IMR-90 (cell line): ENCODE measurements at regions of chr7 and their contacts with region 1.

Region 1: GRCh38 chr7:98841179-98841997 is 28.4 kb downstream of the TMEM130 start:
- DNase-seq: peak; percentile 85
- ATAC-seq: peak; percentile 88
- H3K4me3 ChIP-seq: no peak overlapping the region
- H3K27ac ChIP-seq: peak overlapping the region; percentile 26; the same call in 1 of the 2 replicates
- H3K4me1 ChIP-seq: peaks cover 5% of the 10 kb centered on the region; the same call in 1 of the 2 replicates
- H3K27me3 ChIP-seq: no peaks in the 10 kb centered on the region; the same call in 1 of the 2 replicates
- CTCF ChIP-seq: peak; percentile 90
- POLR2A ChIP-seq: no peak
- RAD21 ChIP-seq: peak; percentile 93

Region 2: DNA sequence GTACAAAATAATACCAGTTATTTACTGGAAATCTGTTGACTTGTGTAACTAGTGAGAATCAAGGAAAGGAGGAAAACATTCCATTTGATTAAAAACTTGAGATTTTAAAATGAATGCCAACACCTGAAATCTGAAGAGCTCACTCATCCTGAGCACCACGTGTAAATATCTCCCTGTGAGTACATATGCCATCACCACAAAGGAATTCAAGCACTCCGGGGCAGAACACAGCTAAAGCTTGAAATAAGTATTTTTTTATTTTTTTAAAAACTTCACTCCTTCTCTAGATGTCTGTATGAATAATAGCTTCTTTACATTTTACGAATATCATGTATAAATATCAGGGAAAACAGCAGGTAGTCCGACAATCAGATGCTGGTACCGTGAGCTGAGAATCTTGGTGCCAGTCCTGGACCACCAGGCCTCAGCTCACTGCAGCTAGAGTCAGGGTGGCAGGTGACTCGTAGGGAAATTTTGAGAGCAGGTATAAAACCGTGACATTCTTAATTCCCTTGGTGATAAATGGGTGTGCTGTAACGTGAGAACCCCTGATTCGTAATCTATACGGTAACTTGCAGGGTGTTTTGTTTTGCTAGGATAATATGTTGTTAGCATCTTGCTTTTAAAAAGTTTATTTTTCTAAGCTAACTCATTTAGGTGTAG is 722.0 kb before region 1 on chr7:
- CTCF ChIA-PET with region 1: no interaction called
- POLR2A ChIA-PET with region 1: no interaction called
- dilution Hi-C with region 1: no loop called
- in situ Hi-C with region 1: no loop called
- intact Hi-C with region 1: loop called (anchors 10 kb)
- DNase-seq: peak; percentile 79
- ATAC-seq: peak; percentile 73
- H3K4me3 ChIP-seq: no peak overlapping the region
- H3K27ac ChIP-seq: no peak overlapping the region
- H3K4me1 ChIP-seq: peaks cover 7% of the 10 kb centered on the region
- H3K27me3 ChIP-seq: no peaks in the 10 kb centered on the region
- CTCF ChIP-seq: no peak
- POLR2A ChIP-seq: no peak
- RAD21 ChIP-seq: no peak

Region 3: DNA sequence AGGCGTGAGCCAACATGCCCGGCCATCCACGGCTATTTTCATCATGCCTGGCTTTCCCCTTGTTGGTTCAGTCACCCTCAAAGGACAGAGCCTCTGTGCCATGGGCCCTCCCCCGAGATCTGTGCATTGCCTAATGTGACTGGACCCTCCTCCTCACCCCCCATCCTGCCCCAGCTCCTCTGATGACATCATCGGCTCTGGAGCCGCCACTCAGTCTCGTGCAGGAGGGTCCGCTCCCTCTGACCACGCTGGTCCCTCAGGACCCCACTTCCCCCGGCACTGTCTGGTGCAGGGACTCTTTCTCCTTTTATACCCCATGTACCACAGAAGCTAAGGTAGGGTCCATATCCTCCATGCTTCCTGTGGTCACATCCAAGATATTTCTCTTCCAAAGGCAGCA is 407.3 kb before region 1 on chr7:
- CTCF ChIA-PET with region 1: interaction called, 7 read pairs
- POLR2A ChIA-PET with region 1: no interaction called
- dilution Hi-C with region 1: no loop called
- in situ Hi-C with region 1: loop called (anchors 5 kb)
- intact Hi-C with region 1: loop called (anchors 1 kb)
- DNase-seq: no peak
- ATAC-seq: no peak
- H3K4me3 ChIP-seq: no peak overlapping the region
- H3K27ac ChIP-seq: no peak overlapping the region
- H3K4me1 ChIP-seq: no peaks in the 10 kb centered on the region
- H3K27me3 ChIP-seq: no peaks in the 10 kb centered on the region
- CTCF ChIP-seq: no peak
- POLR2A ChIP-seq: no peak
- RAD21 ChIP-seq: no peak

Region 4: DNA sequence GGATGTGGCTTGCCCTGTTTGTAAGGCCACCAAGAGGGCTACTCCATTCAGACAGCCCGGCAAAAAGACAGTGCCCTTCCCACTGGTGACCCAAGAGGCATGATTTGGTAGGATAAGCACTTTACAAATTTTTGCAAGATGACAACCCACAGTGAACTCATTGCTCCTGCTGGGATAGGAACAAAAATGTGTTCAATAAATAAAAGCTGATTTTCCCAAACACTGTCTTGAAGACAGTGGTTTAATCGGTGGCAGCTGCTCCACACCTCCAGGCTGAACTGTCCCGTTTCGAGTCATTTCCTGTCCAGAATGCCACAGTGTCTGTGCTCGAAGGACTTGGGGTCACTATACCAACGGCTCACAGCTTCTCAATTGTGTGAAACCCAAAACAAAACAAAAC is 269.4 kb before region 1 on chr7:
- CTCF ChIA-PET with region 1: no interaction called
- POLR2A ChIA-PET with region 1: no interaction called
- dilution Hi-C with region 1: no loop called
- in situ Hi-C with region 1: no loop called
- intact Hi-C with region 1: no loop called
- DNase-seq: no peak
- ATAC-seq: no peak
- H3K4me3 ChIP-seq: no peak overlapping the region
- H3K27ac ChIP-seq: no peak overlapping the region
- H3K4me1 ChIP-seq: no peaks in the 10 kb centered on the region
- H3K27me3 ChIP-seq: no peaks in the 10 kb centered on the region
- CTCF ChIP-seq: no peak
- POLR2A ChIP-seq: no peak
- RAD21 ChIP-seq: no peak